Activated T-helper 1 cell treated with anti-CD3 and anti-CD28 coated beads, Interleukin-12 subunit alpha, Interleukin-12 subunit beta, Interleukin-2, Interleukin-4 antibody, amounts not matched to agents 30 ng/mL and 10 ng/mL and 1 ng/mL, durations not matched to agents 14 hours and 24 hours and 36 hours (primary cell): ENCODE measurements at regions of chr2 and their contacts with region 1.

Region 1: GRCh38 chr2:68715353-68716041 is 19.1 kb upstream of the ARHGAP25 start:
- DNase-seq: no peak
- H3K4me3 Mint-ChIP-seq: peak overlapping the region; percentile 47
- H3K27ac Mint-ChIP-seq: peak overlapping the region; percentile 59
- H3K4me1 Mint-ChIP-seq: peaks cover 82% of the 10 kb centered on the region
- H3K27me3 Mint-ChIP-seq: peaks cover 4% of the 10 kb centered on the region

Region 2: GRCh38 chr2:68594674-68595492 is 120.6 kb before region 1 on chr2:
- intact Hi-C with region 1: loop called (anchors 1 kb)
- DNase-seq: peak; percentile 35
- H3K4me3 Mint-ChIP-seq: no peak overlapping the region
- H3K27ac Mint-ChIP-seq: no peak overlapping the region
- H3K4me1 Mint-ChIP-seq: peaks cover 8% of the 10 kb centered on the region
- H3K27me3 Mint-ChIP-seq: peaks cover 6% of the 10 kb centered on the region

Region 3: DNA sequence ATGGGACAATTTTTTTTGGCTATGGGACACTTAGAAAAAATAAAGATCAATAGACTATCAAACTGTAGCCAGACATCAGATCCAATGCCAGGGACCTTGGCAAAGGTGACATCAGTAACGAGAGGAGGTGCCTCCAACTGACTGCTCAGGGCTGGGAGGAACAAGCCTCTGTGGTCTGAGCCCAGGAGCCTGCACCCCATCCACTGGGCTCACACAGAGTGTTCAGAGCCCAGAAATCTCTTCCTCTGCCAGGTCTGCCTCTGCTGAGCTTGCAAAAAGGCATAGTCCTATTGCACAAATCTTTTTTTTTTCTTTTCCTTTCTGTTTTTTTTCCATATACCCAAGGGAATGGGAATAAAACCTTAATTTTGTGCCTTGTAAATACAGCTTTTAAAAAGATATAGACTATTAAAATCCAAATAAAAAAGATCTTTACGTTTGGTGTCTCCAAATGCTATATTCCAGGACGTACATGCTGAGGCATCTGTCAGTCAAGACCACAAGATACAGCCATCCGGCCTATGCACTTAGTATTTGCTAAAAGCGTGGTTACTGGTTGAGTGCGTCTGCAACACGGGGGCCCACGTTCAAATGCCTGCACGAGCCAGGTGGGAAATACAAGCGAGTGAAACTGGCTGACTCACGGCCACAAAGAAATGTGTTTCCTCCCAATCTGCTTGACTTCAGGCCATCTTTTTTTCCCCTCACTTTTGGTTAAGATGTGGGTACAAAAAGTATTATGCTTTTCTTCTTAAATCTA is 11.3 kb after region 1 on chr2:
- intact Hi-C with region 1: loop called (anchors 1 kb)
- DNase-seq: peak; percentile 74
- H3K4me3 Mint-ChIP-seq: no peak overlapping the region
- H3K27ac Mint-ChIP-seq: peak overlapping the region; percentile 82
- H3K4me1 Mint-ChIP-seq: peaks cover 86% of the 10 kb centered on the region
- H3K27me3 Mint-ChIP-seq: peaks cover 2% of the 10 kb centered on the region

Region 4: DNA sequence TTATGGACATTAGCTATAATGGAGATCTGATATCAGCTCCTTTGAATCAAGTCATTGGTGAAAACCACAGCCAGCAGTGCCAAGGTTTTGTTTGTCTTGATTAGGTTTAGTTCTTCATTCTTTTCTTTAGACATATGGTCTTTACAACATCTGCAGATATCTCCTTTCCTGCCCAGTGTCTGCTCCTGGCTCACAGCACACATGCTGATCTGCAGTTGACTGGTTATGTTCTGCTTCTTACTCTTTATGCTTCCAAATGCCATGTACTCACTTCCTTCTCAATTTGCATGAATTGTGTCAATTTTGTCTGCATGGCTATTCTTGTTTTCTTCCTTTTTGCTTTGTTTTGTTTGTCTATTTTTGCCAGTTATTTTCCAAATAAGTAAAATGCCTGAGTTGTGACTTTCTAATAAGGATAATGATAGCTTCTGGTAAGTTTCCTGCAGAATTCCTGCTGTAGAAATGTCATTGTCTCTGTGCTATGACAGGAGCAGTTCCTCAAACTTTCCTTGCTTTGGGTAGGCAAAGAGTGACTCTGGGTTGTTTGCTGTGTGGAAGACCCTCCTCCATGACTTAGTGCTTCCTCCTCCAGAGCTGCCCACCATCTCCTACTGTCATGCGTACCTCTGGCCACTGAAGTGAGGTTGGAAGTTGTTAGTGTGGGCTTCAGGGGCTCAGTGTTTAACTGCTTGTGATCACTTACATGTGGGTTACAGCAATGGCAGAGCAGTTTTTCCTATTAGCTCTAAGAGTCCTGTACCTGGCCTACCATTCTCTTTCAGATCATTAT is 27.3 kb after region 1 on chr2:
- intact Hi-C with region 1: loop called (anchors 1 kb)
- DNase-seq: no peak
- H3K4me3 Mint-ChIP-seq: peak overlapping the region; percentile 53
- H3K27ac Mint-ChIP-seq: peak overlapping the region; percentile 55
- H3K4me1 Mint-ChIP-seq: peaks cover 92% of the 10 kb centered on the region
- H3K27me3 Mint-ChIP-seq: no peaks in the 10 kb centered on the region

Region 5: DNA sequence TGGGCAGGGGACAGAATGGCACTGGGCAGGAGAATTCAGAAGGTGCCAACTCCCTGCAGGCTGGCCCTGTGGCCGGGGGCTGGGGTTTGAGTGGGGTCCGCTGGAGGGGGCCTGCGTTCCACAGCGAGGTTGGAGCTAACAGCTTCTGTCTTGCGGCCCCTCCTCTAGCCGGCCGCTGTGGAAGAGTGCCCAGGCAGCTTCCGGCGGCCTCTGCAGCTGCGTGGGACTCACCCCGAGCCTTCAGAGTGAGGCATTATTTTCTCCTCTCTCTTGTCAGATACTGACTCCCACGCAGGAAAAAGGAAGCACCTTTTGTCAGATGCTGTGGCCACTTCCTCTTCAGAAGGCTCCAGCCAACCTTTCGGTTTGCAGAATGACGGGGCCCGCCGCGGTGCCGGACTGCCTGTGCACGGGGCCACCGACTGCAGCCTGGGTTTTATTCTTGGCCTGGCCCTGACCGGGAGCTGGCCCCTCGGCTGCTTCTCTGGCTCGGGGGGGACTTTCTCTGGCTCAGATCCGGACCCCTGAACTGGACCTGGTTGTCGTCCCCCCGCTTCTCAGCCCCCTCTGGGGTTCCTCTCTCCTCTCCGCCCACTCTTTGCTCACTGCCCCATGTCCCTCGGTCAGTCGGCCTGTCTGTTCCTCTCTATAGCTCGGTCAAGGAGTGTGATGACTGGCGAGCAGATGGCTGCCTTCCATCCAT is 59.2 kb after region 1 on chr2:
- intact Hi-C with region 1: loop called (anchors 1 kb)
- DNase-seq: peak; percentile 66
- H3K4me3 Mint-ChIP-seq: peak overlapping the region; percentile 81
- H3K27ac Mint-ChIP-seq: peak overlapping the region; percentile 91
- H3K4me1 Mint-ChIP-seq: peaks cover 89% of the 10 kb centered on the region
- H3K27me3 Mint-ChIP-seq: no peaks in the 10 kb centered on the region

Region 6: DNA sequence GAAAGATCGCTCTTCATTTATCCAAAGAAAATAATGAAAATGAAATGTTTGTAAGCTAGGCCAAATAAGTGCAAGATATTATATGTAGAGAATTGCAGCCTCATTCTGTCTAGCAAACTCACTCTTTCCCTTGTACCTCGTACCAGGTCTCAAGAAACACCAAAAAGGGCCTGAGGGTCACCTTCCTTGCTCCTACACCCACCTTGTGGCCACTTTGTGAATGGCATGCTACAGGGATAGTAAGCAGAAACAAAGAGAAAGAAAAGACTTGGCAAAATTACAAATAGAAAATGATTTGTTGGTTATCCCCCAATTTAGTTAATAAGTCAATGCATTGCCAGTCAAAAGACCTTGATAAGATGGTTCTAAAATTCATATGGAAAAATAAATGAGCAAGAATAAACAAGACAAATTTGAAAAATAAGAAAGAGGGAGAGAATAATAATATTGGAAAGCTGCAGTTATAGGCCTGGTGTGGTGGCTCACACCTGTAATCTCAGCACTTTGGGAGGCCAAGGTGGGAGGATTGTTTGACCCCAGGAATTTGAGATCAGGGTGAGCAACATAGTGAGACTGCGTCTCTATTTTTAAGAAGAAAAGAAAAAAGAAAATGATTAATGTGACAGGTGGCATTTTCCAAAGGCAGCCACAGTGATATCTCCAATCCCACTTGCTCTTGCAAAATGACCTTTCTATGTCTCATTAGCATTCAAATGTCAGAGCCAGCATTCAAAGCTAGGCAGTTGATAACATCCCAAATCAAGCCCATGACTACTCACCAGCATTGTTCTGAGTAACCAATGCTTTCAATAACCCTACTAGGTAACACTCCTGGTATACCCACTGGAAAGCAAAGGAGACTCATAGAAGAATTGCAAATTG is 194.5 kb after region 1 on chr2:
- intact Hi-C with region 1: loop called (anchors 1 kb)
- DNase-seq: peak; percentile 56
- H3K4me3 Mint-ChIP-seq: peak overlapping the region; percentile 12
- H3K27ac Mint-ChIP-seq: peak overlapping the region; percentile 70
- H3K4me1 Mint-ChIP-seq: peaks cover 33% of the 10 kb centered on the region
- H3K27me3 Mint-ChIP-seq: no peaks in the 10 kb centered on the region